ENCODE measurements at regions of chr3 and their contacts with region 1.

Region 1: GRCh38 chr3:28328188-28329151 is 20.1 kb upstream of the ZCWPW2 start:
- DNase-seq: peak in 4 of 5 donors; percentile 51 to 62 (median 53)
- H3K4me3 ChIP-seq: no peak overlapping the region
- H3K4me3 Mint-ChIP-seq: no peak overlapping the region
- H3K27ac ChIP-seq: no peak overlapping the region
- H3K27ac Mint-ChIP-seq: peak overlapping the region in 2 of 7 donors; percentile 42 to 55
- H3K4me1 ChIP-seq: peaks cover 21% of the 10 kb centered on the region
- H3K4me1 Mint-ChIP-seq: peaks cover 12 to 27% (median 19%) of the 10 kb centered on the region in 4 donors
- H3K27me3 ChIP-seq: no peaks in the 10 kb centered on the region
- H3K27me3 Mint-ChIP-seq: no peaks in the 10 kb centered on the region

Region 2: DNA sequence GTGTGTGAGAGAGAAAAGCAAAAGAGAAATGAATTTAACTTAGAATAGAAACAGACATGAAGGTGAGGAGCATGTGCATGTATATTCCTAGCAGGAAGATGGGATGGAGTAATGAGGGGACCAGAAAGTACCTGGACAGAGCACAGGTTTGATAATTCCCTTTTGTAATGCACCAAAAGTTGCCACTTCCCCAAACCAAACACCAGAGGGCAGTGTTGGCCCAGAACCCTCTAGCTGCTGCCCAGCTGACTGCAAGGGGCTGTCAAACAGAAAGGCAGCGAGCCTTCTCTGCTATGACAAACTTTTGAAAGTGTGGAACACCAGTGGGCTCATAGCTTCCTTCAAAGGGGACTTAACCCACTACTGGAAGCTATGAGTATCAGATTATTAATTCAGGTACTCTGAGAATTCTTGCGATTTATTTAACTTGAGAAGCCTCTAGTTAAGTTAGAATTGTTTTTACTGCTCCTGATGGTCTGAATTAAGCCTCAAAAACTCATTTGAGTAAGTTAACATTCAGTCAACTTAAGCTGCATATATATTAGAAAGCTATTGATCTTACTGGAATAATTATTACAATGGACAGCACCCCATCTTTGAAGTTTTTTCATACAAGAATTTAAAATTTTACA is 1194.2 kb before region 1 on chr3:
- CTCF ChIA-PET with region 1: no interaction called
- POLR2A ChIA-PET with region 1: no interaction called
- intact Hi-C with region 1: loop called (anchors 2 kb)
- DNase-seq: peak; percentile 41 to 53 (median 49)
- H3K4me3 ChIP-seq: no peak overlapping the region
- H3K4me3 Mint-ChIP-seq: no peak overlapping the region
- H3K27ac ChIP-seq: no peak overlapping the region
- H3K27ac Mint-ChIP-seq: no peak overlapping the region
- H3K4me1 ChIP-seq: no peaks in the 10 kb centered on the region
- H3K4me1 Mint-ChIP-seq: no peaks in the 10 kb centered on the region
- H3K27me3 ChIP-seq: no peaks in the 10 kb centered on the region
- H3K27me3 Mint-ChIP-seq: peaks cover 0 to 2% of the 10 kb centered on the region in 2 donors

Region 3: GRCh38 chr3:27357665-27358258 is 970.7 kb before region 1 on chr3:
- CTCF ChIA-PET with region 1: no interaction called
- POLR2A ChIA-PET with region 1: no interaction called
- intact Hi-C with region 1: loop called (anchors 5 kb)
- DNase-seq: peak; percentile 47 to 59 (median 53)
- H3K4me3 ChIP-seq: no peak overlapping the region
- H3K4me3 Mint-ChIP-seq: peak overlapping the region in 6 of 8 donors; percentile 14 to 74 (median 30)
- H3K27ac ChIP-seq: no peak overlapping the region
- H3K27ac Mint-ChIP-seq: peak overlapping the region in 1 of 7 donors; percentile 58
- H3K4me1 ChIP-seq: peaks cover 34% of the 10 kb centered on the region
- H3K4me1 Mint-ChIP-seq: peaks cover 28 to 60% (median 40%) of the 10 kb centered on the region in 4 donors
- H3K27me3 ChIP-seq: no peaks in the 10 kb centered on the region
- H3K27me3 Mint-ChIP-seq: no peaks in the 10 kb centered on the region

Region 4: GRCh38 chr3:27721717-27722542 is 606.5 kb before region 1 on chr3 and contains the start of gene EOMES:
- CTCF ChIA-PET with region 1: interaction called, 59 read pairs
- POLR2A ChIA-PET with region 1: interaction called, 20 read pairs
- intact Hi-C with region 1: no loop called
- DNase-seq: peak; percentile 73 to 79 (median 75)
- H3K4me3 ChIP-seq: peak within 1 kb of the TSS; percentile 61 to 84
- H3K4me3 Mint-ChIP-seq: peak within 1 kb of the TSS; percentile 85 to 95 (median 88)
- H3K27ac ChIP-seq: no peak within 1 kb of the TSS
- H3K27ac Mint-ChIP-seq: peak within 1 kb of the TSS in 4 of 7 donors; percentile 56 to 81 (median 71)
- H3K4me1 ChIP-seq: peaks cover 34% of the 10 kb centered on the region
- H3K4me1 Mint-ChIP-seq: peaks cover 17 to 54% (median 29%) of the 10 kb centered on the region in 4 donors
- H3K27me3 ChIP-seq: peaks cover 48% of the 10 kb centered on the region
- H3K27me3 Mint-ChIP-seq: peaks cover 47 to 49% of the 10 kb centered on the region in 2 donors
- total RNA-seq, gene EOMES: 4.2 to 4.8 TPM

Region 5: GRCh38 chr3:27927882-27928281 is 400.6 kb before region 1 on chr3:
- CTCF ChIA-PET with region 1: no interaction called
- POLR2A ChIA-PET with region 1: no interaction called
- intact Hi-C with region 1: no loop called
- DNase-seq: no peak
- H3K4me3 ChIP-seq: no peak overlapping the region
- H3K4me3 Mint-ChIP-seq: no peak overlapping the region
- H3K27ac ChIP-seq: no peak overlapping the region
- H3K27ac Mint-ChIP-seq: no peak overlapping the region
- H3K4me1 ChIP-seq: no peaks in the 10 kb centered on the region
- H3K4me1 Mint-ChIP-seq: peaks cover 0 to 4% (median 1%) of the 10 kb centered on the region in 4 donors
- H3K27me3 ChIP-seq: no peaks in the 10 kb centered on the region
- H3K27me3 Mint-ChIP-seq: no peaks in the 10 kb centered on the region

Region 6: DNA sequence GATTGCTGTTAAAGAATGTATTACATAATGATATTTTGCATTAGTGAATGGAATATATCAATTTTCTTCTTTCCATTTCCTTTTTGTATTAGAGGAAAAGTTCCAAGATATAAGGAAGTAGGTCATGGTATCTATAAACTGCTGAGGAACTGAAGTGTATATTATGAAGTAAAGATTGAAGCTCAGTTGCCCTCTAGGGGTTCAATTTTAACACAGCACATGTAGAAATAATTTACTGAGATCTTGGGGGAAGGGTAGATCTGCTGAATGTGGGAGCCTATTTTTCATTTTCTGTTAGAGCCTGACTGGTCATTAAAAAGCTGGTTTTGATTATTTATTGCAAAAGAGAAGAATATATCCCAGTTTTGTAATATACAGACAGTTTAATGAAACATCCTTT is 41.9 kb before region 1 on chr3:
- CTCF ChIA-PET with region 1: interaction called, 4 read pairs
- POLR2A ChIA-PET with region 1: no interaction called
- intact Hi-C with region 1: loop called (anchors 2 kb)
- DNase-seq: peak in 4 of 5 donors; percentile 28 to 38 (median 31)
- H3K4me3 ChIP-seq: no peak overlapping the region
- H3K4me3 Mint-ChIP-seq: no peak overlapping the region
- H3K27ac ChIP-seq: no peak overlapping the region
- H3K27ac Mint-ChIP-seq: no peak overlapping the region
- H3K4me1 ChIP-seq: no peaks in the 10 kb centered on the region
- H3K4me1 Mint-ChIP-seq: peaks cover 9 to 24% (median 12%) of the 10 kb centered on the region in 4 donors
- H3K27me3 ChIP-seq: no peaks in the 10 kb centered on the region
- H3K27me3 Mint-ChIP-seq: no peaks in the 10 kb centered on the region

Region 7: DNA sequence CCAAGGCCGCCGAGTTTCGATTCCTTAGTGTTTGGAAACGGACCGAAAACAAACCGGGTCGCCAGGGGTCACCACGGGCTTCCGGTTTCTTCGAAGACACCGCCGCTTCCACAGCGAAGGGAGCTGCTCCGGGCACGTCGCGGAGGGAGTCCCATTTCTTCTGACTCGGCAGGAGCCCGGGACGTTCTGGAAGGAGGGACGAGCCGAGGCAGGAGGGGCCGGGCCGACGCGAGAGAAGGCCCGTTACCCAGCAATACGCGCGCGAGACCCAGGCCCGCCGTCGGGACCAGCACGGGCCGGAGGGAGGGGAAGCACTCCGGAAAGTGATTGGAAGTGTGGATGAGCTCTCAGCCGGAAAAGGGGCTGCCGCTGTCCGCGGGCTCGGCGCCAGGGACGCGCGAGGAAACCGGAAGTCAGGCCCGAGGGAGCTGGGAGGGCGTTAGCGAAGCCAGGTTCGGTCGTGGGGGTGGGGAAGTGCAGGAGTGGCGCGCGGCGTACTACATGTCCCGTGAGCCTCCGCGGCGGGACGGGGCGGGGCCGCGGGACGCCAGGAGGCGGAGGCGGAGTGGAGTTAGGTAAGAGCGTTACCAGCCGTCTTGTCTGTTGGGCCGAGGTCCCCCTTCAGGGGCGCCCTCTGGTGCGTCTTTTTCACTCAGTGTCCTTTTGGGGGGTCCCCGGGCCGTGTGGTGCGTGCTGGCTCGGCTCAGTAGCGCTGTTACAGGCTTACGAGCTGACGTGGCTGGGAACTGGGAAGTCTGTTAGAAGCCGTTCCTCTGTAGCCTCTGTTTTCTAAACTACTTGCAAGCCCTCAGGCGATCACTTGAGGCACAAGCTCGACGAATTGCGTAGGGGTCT is 20.4 kb after region 1 on chr3 and contains the starts of genes AZI2 and ZCWPW2:
- CTCF ChIA-PET with region 1: interaction called, 15 read pairs
- POLR2A ChIA-PET with region 1: interaction called, 10 read pairs
- intact Hi-C with region 1: loop called (anchors 2 kb)
- DNase-seq: peak; percentile 90 to 94 (median 91)
- H3K4me3 ChIP-seq: peak within 1 kb of the TSS; percentile 85 to 94
- H3K4me3 Mint-ChIP-seq: peak within 1 kb of the TSS; percentile 93 to 99 (median 97)
- H3K27ac ChIP-seq: peak within 1 kb of the TSS; percentile 94
- H3K27ac Mint-ChIP-seq: peak within 1 kb of the TSS; percentile 97 to 100 (median 98)
- H3K4me1 ChIP-seq: peaks cover 50% of the 10 kb centered on the region
- H3K4me1 Mint-ChIP-seq: peaks cover 38 to 64% (median 51%) of the 10 kb centered on the region in 4 donors
- H3K27me3 ChIP-seq: no peaks in the 10 kb centered on the region
- H3K27me3 Mint-ChIP-seq: no peaks in the 10 kb centered on the region
- total RNA-seq, gene AZI2: 40.3 to 44.5 TPM
- total RNA-seq, gene ZCWPW2: 0.61 to 1.5 TPM

Region 8: DNA sequence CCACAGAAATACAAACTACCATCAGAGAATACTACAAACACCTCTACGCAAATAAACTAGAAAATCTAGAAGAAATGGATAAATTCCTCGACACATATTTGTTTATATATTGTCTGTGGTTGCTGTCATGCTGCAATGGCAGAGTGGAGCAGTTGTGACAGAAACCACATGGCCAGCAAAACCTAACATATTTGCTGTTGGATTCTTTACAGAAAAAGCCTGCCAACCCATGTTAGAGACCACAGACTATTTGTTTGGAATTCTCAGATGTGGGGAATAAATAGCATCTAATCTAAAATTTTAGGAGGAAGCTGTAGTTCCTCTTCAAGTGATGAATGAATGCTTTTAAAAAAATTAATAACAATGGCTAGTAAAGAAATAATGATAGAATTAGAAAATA is 361.7 kb after region 1 on chr3:
- CTCF ChIA-PET with region 1: no interaction called
- POLR2A ChIA-PET with region 1: no interaction called
- intact Hi-C with region 1: no loop called
- DNase-seq: no peak
- H3K4me3 ChIP-seq: no peak overlapping the region
- H3K4me3 Mint-ChIP-seq: no peak overlapping the region
- H3K27ac ChIP-seq: no peak overlapping the region
- H3K27ac Mint-ChIP-seq: no peak overlapping the region
- H3K4me1 ChIP-seq: no peaks in the 10 kb centered on the region
- H3K4me1 Mint-ChIP-seq: no peaks in the 10 kb centered on the region
- H3K27me3 ChIP-seq: no peaks in the 10 kb centered on the region
- H3K27me3 Mint-ChIP-seq: peaks cover 0 to 1% of the 10 kb centered on the region in 2 donors

Measured in CD4-positive, alpha-beta memory T cell (primary cell).